ENCODE measurements at regions of chr19 and their contacts with region 1.

Region 1: GRCh38 chr19:36152352-36153091 is at the start of gene COX7A1:
- DNase-seq: peak; percentile 86
- total RNA-seq, gene COX7A1: 1,917 TPM

Region 2: GRCh38 chr19:36103626-36104552 is 48.6 kb before region 1 on chr19:
- intact Hi-C with region 1: no loop called
- DNase-seq: no peak

Region 3: GRCh38 chr19:36132489-36132891 is 20.0 kb before region 1 on chr19:
- intact Hi-C with region 1: loop called (anchors 1 kb)
- DNase-seq: no peak

Region 4: GRCh38 chr19:36139473-36140303 is 12.8 kb before region 1 on chr19 and contains the start of gene CAPNS1:
- intact Hi-C with region 1: loop called (anchors 1 kb)
- DNase-seq: peak; percentile 99
- total RNA-seq, gene CAPNS1: 892 TPM

Region 5: GRCh38 chr19:36547001-36547732 is 394.6 kb after region 1 on chr19:
- intact Hi-C with region 1: no loop called
- DNase-seq: no peak

Measured in cardiac septum (tissue), 1 donor.